H1 (cell line): ENCODE measurements at regions of chr3 and their contacts with region 1.

Region 1: DNA sequence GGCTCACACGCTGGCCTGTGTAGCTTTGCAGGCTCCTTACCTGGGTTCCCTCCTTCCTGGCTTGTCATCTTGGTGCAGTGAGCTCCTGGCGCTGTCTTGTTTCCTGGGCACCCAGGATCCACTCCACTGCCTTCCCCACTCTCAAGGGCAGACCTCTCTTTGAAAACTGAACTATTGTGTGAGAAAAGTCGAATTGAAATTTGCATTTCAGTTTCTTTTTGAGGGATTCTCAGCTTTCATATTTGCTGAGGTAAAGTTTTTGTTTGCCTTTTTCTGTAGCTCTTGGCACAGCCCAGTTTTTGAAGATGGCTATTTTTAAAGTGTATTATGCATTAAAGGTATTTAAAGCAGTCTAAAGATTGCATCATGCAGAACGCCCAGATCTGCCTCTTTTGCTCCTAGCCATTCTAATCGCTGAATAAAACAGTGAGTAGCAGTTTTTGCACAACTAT is 70.1 kb downstream of the CCK start:
- DNase-seq: no peak
- H3K4me3 ChIP-seq: no peak overlapping the region
- H3K27ac ChIP-seq: no peak overlapping the region
- H3K4me1 ChIP-seq: peaks cover 0 to 3% (median 0%) of the 10 kb centered on the region in 4 experiments; a peak in 3 of 7 replicates
- H3K27me3 ChIP-seq: no peaks in the 10 kb centered on the region
- CTCF ChIP-seq: no peak
- EP300 ChIP-seq: no peak
- POLR2A ChIP-seq: no peak
- RAD21 ChIP-seq: no peak

Region 2: DNA sequence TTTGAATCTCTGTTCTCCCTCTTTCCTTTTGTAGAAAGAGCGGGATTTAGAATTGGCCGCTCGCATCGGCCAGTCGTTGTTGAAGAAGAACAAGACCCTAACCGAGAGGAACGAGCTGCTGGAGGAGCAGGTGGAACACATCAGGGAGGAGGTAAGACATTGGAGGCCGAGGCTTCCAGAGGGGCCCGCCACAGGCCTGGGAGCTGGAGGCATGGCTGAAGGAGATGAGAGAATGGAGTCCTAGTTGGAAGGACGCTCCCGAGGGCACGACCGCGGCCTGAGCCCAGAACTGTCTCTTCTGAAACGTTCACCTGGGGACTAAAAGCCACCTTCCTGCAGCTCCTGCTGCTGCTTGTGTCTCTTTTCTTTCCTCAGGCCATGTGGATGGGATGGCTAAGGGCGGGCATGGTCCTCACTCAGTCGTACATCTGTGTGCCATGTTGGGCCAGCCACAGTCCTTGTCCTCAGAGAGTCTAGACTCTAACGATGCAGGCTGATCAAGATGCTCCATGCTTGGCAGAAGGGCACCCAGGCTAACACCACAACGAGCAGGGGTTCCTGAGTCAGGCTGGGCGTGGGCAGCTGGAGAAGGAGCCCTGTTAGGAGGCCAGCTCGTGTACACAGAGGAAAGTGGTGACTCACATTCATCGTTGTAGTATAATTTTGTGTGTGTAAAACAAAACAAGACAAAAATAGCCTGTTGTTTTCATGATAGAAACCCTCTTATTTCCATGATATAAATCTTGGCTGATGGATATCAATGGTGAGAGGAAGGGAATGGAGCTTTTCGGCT is 11.1 kb before region 1 on chr3:
- CTCF ChIA-PET with region 1: interaction called, 68 read pairs
- POLR2A ChIA-PET with region 1: no interaction called
- DNase-seq: no peak
- H3K4me3 ChIP-seq: no peak overlapping the region
- H3K27ac ChIP-seq: no peak overlapping the region
- H3K4me1 ChIP-seq: peaks cover 0 to 6% (median 4%) of the 10 kb centered on the region in 4 experiments; a peak in 5 of 7 replicates
- H3K27me3 ChIP-seq: no peaks in the 10 kb centered on the region
- CTCF ChIP-seq: no peak
- EP300 ChIP-seq: no peak
- POLR2A ChIP-seq: no peak
- RAD21 ChIP-seq: no peak